Activated naive CD4-positive, alpha-beta T cell treated with anti-CD3 and anti-CD28 coated beads for 36 hours (primary cell): ENCODE measurements at regions of chr7 and their contacts with region 1.

Region 1: GRCh38 chr7:99918959-99919813 is at the start of gene TRIM4:
- DNase-seq: peak; percentile 96
- H3K4me3 Mint-ChIP-seq: peak within 1 kb of the TSS; percentile 90
- H3K27ac Mint-ChIP-seq: peak within 1 kb of the TSS; percentile 93
- H3K4me1 Mint-ChIP-seq: peaks cover 38% of the 10 kb centered on the region
- H3K27me3 Mint-ChIP-seq: no peaks in the 10 kb centered on the region
- total RNA-seq, gene TRIM4: 25.7 to 25.8 TPM

Region 2: GRCh38 chr7:99472561-99473243 is 446.5 kb before region 1 on chr7 and contains the start of gene ZNF789:
- CTCF ChIA-PET with region 1: no interaction called
- intact Hi-C with region 1: loop called (anchors 5 kb)
- DNase-seq: peak; percentile 99
- H3K4me3 Mint-ChIP-seq: peak within 1 kb of the TSS; percentile 95
- H3K27ac Mint-ChIP-seq: peak within 1 kb of the TSS; percentile 83
- H3K4me1 Mint-ChIP-seq: peaks cover 32% of the 10 kb centered on the region
- H3K27me3 Mint-ChIP-seq: no peaks in the 10 kb centered on the region
- total RNA-seq, gene ZNF789: 8.0 to 9.8 TPM

Region 3: GRCh38 chr7:99631295-99632109 is 287.7 kb before region 1 on chr7:
- CTCF ChIA-PET with region 1: no interaction called
- intact Hi-C with region 1: loop called (anchors 5 kb)
- DNase-seq: peak; percentile 85
- H3K4me3 Mint-ChIP-seq: no peak overlapping the region
- H3K27ac Mint-ChIP-seq: peak overlapping the region; percentile 97
- H3K4me1 Mint-ChIP-seq: peaks cover 62% of the 10 kb centered on the region
- H3K27me3 Mint-ChIP-seq: no peaks in the 10 kb centered on the region

Region 4: GRCh38 chr7:99997545-99998137 is 78.5 kb after region 1 on chr7:
- CTCF ChIA-PET with region 1: interaction called, 155 read pairs
- intact Hi-C with region 1: no loop called
- DNase-seq: peak; percentile 78
- H3K4me3 Mint-ChIP-seq: peak overlapping the region; percentile 69
- H3K27ac Mint-ChIP-seq: peak overlapping the region; percentile 78
- H3K4me1 Mint-ChIP-seq: peaks cover 10% of the 10 kb centered on the region
- H3K27me3 Mint-ChIP-seq: no peaks in the 10 kb centered on the region

Region 5: GRCh38 chr7:100081535-100082102 is 162.4 kb after region 1 on chr7 and contains the start of gene ZNF3:
- CTCF ChIA-PET with region 1: interaction called, 9 read pairs
- intact Hi-C with region 1: loop called (anchors 1 kb)
- DNase-seq: peak; percentile 99
- H3K4me3 Mint-ChIP-seq: peak within 1 kb of the TSS; percentile 88
- H3K27ac Mint-ChIP-seq: peak within 1 kb of the TSS; percentile 86
- H3K4me1 Mint-ChIP-seq: peaks cover 29% of the 10 kb centered on the region
- H3K27me3 Mint-ChIP-seq: no peaks in the 10 kb centered on the region
- total RNA-seq, gene ZNF3: 13.1 to 14.0 TPM

Region 6: GRCh38 chr7:100215895-100216294 is 296.7 kb after region 1 on chr7:
- CTCF ChIA-PET with region 1: no interaction called
- intact Hi-C with region 1: loop called (anchors 10 kb)
- DNase-seq: no peak
- H3K4me3 Mint-ChIP-seq: no peak overlapping the region
- H3K27ac Mint-ChIP-seq: peak overlapping the region; percentile 8
- H3K4me1 Mint-ChIP-seq: peaks cover 67% of the 10 kb centered on the region
- H3K27me3 Mint-ChIP-seq: no peaks in the 10 kb centered on the region